ENCODE measurements at regions of chr7 and their contacts with region 1.

Region 1: DNA sequence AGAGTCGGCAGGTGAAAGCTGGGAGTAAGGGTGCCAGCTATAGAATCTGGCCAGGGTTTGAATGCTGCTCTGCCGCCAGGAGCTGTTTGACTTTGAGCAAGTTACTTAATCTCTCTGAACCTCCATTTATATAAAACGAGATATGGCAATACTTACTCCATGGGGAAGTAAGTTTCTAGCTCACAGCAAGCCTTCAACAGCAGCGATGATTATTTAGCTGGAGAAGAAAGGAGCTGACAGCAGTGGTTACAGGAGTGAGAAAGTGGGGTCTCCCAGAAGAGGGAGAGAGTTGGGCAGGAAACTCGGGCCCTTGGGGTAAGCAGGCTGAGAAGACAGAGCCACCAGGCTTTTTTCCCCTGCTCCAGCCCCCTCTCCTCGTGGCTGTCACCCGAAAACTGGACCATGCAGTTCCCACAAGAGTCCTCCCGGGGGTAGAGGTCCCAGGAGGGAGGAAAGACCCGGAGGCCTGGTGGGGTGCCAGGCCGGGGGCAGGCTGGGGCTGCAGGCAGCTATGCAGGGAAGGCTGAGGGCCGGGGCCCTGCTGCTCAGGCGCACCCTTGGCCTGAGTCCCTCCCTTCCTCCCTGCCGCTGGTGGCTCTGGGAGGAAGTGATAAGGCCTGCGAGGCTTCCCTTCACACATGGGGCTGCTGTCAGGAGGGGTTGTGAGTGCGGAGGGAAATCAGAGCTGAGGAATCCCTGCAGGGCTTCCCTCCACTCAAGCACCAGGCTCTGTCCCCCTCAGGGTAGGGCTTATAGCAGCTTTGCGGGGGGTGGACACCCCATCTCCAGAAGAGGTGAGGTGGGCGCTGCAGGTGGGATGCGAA is 3.5 kb downstream of the NOS3 start:
- DNase-seq: peak; percentile 91 to 96 (median 93)
- H3K4me3 ChIP-seq: peak overlapping the region in 3 of 7 experiments; percentile 19 to 33 (median 31)
- H3K27ac ChIP-seq: peak overlapping the region in 1 of 2 experiments; percentile 67
- H3K4me1 ChIP-seq: peaks cover 4 to 39% (median 32%) of the 10 kb centered on the region in 4 experiments
- H3K27me3 ChIP-seq: peaks cover 0 to 35% (median 4%) of the 10 kb centered on the region in 5 experiments

Region 2: DNA sequence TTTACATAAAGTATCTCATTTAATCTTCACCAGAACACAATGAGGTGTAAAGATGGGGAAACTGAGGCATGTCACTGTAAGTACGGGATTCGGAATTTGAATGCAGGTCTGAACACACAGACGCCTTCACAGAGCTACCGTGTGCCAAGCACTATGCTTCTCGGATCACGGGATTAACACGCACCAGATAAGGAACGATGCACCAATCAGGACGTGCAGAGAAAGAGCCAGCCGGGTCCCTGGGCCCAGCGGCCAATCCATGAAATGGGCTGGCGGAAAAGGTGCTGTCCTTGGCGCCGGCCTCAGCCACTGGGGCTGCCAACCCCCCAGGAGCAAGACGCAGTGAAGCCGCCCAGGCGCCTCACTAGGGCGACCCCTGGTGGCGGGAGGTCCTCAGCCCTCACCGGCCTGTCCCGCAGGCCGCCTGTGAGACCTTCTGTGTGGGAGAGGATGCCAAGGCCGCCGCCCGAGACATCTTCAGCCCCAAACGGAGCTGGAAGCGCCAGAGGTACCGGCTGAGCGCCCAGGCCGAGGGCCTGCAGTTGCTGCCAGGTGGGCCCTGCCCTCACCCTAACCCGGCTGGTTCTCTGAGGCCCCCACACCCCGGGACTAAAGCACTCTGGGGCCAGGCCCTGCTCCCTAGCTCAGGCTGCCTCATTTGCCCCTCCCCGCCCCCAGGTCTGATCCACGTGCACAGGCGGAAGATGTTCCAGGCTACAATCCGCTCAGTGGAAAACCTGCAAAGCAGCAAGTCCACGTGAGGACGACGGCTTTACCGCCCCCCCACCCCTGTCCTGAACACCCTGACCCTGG is 14.4 kb after region 1 on chr7:
- CTCF ChIA-PET with region 1: interaction called, 101 read pairs
- POLR2A ChIA-PET with region 1: interaction called, 3 read pairs
- DNase-seq: peak in 2 of 3 donors; percentile 65 to 69
- H3K4me3 ChIP-seq: peak overlapping the region in 2 of 7 experiments; percentile 3 to 14
- H3K27ac ChIP-seq: peak overlapping the region in 1 of 2 experiments; percentile 44
- H3K4me1 ChIP-seq: peaks cover 0 to 36% (median 30%) of the 10 kb centered on the region in 4 experiments
- H3K27me3 ChIP-seq: peaks cover 0 to 38% (median 4%) of the 10 kb centered on the region in 5 experiments

Region 3: GRCh38 chr7:151017953-151018420 is 23.6 kb after region 1 on chr7:
- CTCF ChIA-PET with region 1: interaction called, 101 read pairs
- POLR2A ChIA-PET with region 1: no interaction called
- DNase-seq: peak; percentile 70 to 87 (median 86)
- H3K4me3 ChIP-seq: peak overlapping the region in 6 of 7 experiments; percentile 14 to 66 (median 46)
- H3K27ac ChIP-seq: peak overlapping the region in 1 of 2 experiments; percentile 61
- H3K4me1 ChIP-seq: peaks cover 0 to 40% (median 31%) of the 10 kb centered on the region in 4 experiments
- H3K27me3 ChIP-seq: peaks cover 5 to 40% (median 13%) of the 10 kb centered on the region in 5 experiments

Measured in common myeloid progenitor, CD34-positive (primary cell).